ENCODE measurements at regions of chr18 and their contacts with region 1.

Region 1: DNA sequence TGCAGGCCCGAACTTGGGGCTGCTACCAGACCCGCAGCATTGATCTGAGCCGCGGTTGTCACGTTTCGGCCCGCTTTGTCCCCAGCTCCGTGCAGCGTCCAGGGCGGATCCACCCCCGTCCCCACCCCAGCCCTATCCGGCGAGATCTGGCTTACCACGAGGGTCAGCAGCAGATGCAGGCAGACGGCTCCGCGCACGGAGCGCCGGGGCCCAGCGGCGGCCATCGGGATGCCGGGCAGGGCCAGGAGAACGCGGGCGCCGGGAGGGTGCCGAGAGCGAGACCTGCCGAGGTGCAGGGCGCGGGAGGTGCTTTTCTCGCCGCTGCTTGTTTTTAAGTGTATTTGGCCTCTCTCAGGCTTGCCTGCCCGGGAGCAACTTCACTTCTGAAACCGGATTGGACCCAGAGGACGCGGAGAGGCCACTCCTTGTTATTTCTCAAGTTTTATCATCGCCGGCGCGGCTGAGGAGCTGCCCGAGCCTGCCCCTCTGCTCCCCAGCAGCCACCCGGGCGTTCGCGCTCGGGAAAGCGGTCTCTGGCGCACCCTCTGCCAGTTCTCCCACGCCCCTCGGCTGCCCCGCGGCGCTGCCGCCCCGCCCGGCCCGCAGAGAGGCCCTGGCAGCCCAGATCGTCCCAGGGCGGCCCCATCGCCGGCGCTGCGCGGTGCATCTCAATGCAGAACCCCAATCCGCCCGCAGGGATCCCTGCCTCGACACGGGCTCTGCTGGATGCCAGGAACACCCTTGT is at the start of gene DSC3:
- DNase-seq: peak; percentile 93
- H3K4me3 Mint-ChIP-seq: peak within 1 kb of the TSS; percentile 97
- H3K27ac Mint-ChIP-seq: peak within 1 kb of the TSS; percentile 98
- H3K4me1 Mint-ChIP-seq: peaks cover 45% of the 10 kb centered on the region
- H3K27me3 Mint-ChIP-seq: no peaks in the 10 kb centered on the region
- CTCF ChIP-seq: no peak
- total RNA-seq, gene DSC3: 56.2 and 60.8 TPM in 2 replicates

Region 2: GRCh38 chr18:30852980-30853379 is 189.6 kb before region 1 on chr18:
- CTCF ChIA-PET with region 1: no interaction called
- POLR2A ChIA-PET with region 1: no interaction called
- intact Hi-C with region 1: no loop called
- DNase-seq: no peak
- H3K4me3 Mint-ChIP-seq: no peak overlapping the region
- H3K27ac Mint-ChIP-seq: no peak overlapping the region
- H3K4me1 Mint-ChIP-seq: no peaks in the 10 kb centered on the region
- H3K27me3 Mint-ChIP-seq: peaks cover 23% of the 10 kb centered on the region
- CTCF ChIP-seq: no peak

Region 3: DNA sequence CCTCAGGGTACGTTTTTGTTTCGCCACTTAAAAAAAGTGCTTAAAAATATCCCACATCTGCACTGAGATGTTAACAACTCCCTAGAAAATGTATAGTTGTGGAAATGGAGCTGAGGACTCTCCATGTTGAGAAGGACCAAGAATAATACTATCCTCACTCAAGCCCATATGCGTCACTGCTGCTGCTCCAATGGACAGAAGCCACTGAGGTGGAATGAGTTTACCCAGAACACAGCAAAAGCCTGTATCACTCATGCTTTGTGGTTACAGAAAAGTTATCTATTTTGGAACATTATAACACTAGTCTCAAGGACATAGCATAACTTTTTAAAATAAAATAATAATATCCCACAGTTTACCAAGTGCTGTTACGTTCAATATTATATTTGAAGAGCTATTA is 32.0 kb before region 1 on chr18:
- CTCF ChIA-PET with region 1: interaction called, 6 read pairs
- POLR2A ChIA-PET with region 1: interaction called, 45 read pairs
- intact Hi-C with region 1: loop called (anchors 2 kb)
- DNase-seq: no peak
- H3K4me3 Mint-ChIP-seq: no peak overlapping the region
- H3K27ac Mint-ChIP-seq: no peak overlapping the region
- H3K4me1 Mint-ChIP-seq: no peaks in the 10 kb centered on the region
- H3K27me3 Mint-ChIP-seq: no peaks in the 10 kb centered on the region
- CTCF ChIP-seq: no peak

Region 4: GRCh38 chr18:31101183-31102024 is 58.8 kb after region 1 on chr18:
- CTCF ChIA-PET with region 1: interaction called, 3 read pairs
- POLR2A ChIA-PET with region 1: interaction called, 221 read pairs
- intact Hi-C with region 1: loop called (anchors 2 kb)
- DNase-seq: peak; percentile 53
- H3K4me3 Mint-ChIP-seq: peak overlapping the region; percentile 82
- H3K27ac Mint-ChIP-seq: peak overlapping the region; percentile 81
- H3K4me1 Mint-ChIP-seq: peaks cover 30% of the 10 kb centered on the region
- H3K27me3 Mint-ChIP-seq: no peaks in the 10 kb centered on the region
- CTCF ChIP-seq: no peak

Region 5: GRCh38 chr18:31241900-31242409 is 199.3 kb after region 1 on chr18:
- CTCF ChIA-PET with region 1: interaction called, 5 read pairs
- POLR2A ChIA-PET with region 1: interaction called, 165 read pairs
- intact Hi-C with region 1: loop called (anchors 1 kb)
- DNase-seq: peak; percentile 96
- H3K4me3 Mint-ChIP-seq: peak overlapping the region; percentile 41
- H3K27ac Mint-ChIP-seq: peak overlapping the region; percentile 84
- H3K4me1 Mint-ChIP-seq: peaks cover 36% of the 10 kb centered on the region
- H3K27me3 Mint-ChIP-seq: no peaks in the 10 kb centered on the region
- CTCF ChIP-seq: peak; percentile 58

Region 6: DNA sequence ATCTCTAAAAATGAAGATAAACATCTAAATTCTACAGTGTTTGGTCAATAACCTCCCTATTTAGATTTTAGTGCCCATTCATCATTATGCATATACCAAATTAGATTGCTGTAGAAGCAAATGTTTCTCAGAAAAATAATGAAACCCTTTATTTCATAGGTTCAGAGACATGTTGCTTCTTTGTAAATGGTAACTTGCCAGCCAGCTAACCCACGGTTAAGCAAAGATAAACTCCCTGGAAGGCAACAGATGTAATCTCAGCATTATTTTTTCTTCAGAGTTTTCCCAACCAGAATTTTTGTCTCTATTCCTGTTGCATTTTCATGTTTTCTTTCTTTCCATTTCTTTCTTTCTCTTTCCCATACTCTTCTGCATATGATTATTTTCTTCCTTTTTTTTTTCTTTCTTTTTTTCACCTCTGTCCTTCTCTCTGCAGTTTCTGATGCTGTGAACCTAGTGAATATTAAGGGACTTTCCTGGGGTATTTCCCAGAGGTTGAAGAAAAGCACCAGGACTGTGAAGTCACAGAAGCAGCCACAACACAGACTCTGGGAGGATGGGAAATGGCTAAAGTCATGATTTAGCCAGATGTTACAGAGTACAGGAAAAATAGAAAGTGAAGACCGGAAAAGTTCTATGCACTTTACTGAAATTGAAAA is 225.3 kb after region 1 on chr18:
- CTCF ChIA-PET with region 1: no interaction called
- POLR2A ChIA-PET with region 1: interaction called, 31 read pairs
- intact Hi-C with region 1: no loop called
- DNase-seq: no peak
- H3K4me3 Mint-ChIP-seq: peak overlapping the region; percentile 12
- H3K27ac Mint-ChIP-seq: peak overlapping the region; percentile 84
- H3K4me1 Mint-ChIP-seq: peaks cover 28% of the 10 kb centered on the region
- H3K27me3 Mint-ChIP-seq: no peaks in the 10 kb centered on the region
- CTCF ChIP-seq: no peak

Region 7: GRCh38 chr18:31454066-31454708 is 411.6 kb after region 1 on chr18:
- CTCF ChIA-PET with region 1: no interaction called
- POLR2A ChIA-PET with region 1: interaction called, 170 read pairs
- intact Hi-C with region 1: loop called (anchors 5 kb)
- DNase-seq: peak; percentile 96
- H3K4me3 Mint-ChIP-seq: peak overlapping the region; percentile 67
- H3K27ac Mint-ChIP-seq: peak overlapping the region; percentile 94
- H3K4me1 Mint-ChIP-seq: peaks cover 23% of the 10 kb centered on the region
- H3K27me3 Mint-ChIP-seq: no peaks in the 10 kb centered on the region
- CTCF ChIP-seq: no peak

Region 8: GRCh38 chr18:31512203-31512764 is 469.7 kb after region 1 on chr18:
- CTCF ChIA-PET with region 1: no interaction called
- POLR2A ChIA-PET with region 1: interaction called, 25 read pairs
- intact Hi-C with region 1: no loop called
- DNase-seq: peak; percentile 87
- H3K4me3 Mint-ChIP-seq: peak overlapping the region; percentile 59
- H3K27ac Mint-ChIP-seq: peak overlapping the region; percentile 95
- H3K4me1 Mint-ChIP-seq: peaks cover 51% of the 10 kb centered on the region
- H3K27me3 Mint-ChIP-seq: no peaks in the 10 kb centered on the region
- CTCF ChIP-seq: no peak